OCI-LY7 (cell line): ENCODE measurements at regions of chr11 and their contacts with region 1.

Region 1: DNA sequence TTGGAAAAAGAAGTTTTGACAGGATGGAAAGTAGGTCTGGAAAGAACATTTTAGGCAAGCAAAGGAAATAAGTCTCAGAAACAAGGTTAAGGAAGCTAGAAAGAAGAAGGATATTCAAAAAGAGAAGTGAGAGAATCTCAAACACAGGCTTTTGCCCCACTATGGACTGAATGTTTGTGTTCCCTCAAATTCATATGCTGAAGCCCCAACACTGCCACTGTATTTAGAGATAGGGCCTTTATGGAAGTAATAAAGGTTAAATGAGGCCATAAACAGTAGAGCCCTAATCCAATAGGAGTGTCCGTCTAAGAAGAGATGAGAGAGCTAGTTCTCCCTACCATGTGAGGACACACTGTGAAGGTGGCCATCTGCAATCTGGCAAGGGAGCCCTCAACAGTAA is 20.6 kb upstream of the RPS13 start:
- DNase-seq: no peak
- H3K4me3 ChIP-seq: no peak overlapping the region
- H3K27ac ChIP-seq: no peak overlapping the region
- H3K4me1 ChIP-seq: no peaks in the 10 kb centered on the region
- CTCF ChIP-seq: no peak

Region 2: GRCh38 chr11:16993495-16993894 is 104.5 kb before region 1 on chr11:
- CTCF ChIA-PET with region 1: no interaction called
- POLR2A ChIA-PET with region 1: no interaction called
- intact Hi-C with region 1: no loop called
- DNase-seq: no peak
- H3K4me3 ChIP-seq: no peak overlapping the region
- H3K27ac ChIP-seq: no peak overlapping the region
- H3K4me1 ChIP-seq: no peaks in the 10 kb centered on the region
- CTCF ChIP-seq: no peak

Region 3: GRCh38 chr11:17077520-17078401 is 20.3 kb before region 1 on chr11 and contains the start of gene RPS13:
- CTCF ChIA-PET with region 1: no interaction called
- POLR2A ChIA-PET with region 1: interaction called, 36 read pairs
- intact Hi-C with region 1: no loop called
- DNase-seq: peak; percentile 98
- H3K4me3 ChIP-seq: peak within 1 kb of the TSS; percentile 84
- H3K27ac ChIP-seq: peak within 1 kb of the TSS; percentile 69
- H3K4me1 ChIP-seq: peaks cover 24% of the 10 kb centered on the region
- CTCF ChIP-seq: no peak
- total RNA-seq, gene RPS13: 1,576 and 1,911 TPM in 2 replicates

Region 4: GRCh38 chr11:17129003-17129402 is 31.0 kb after region 1 on chr11:
- CTCF ChIA-PET with region 1: no interaction called
- POLR2A ChIA-PET with region 1: no interaction called
- intact Hi-C with region 1: loop called (anchors 5 kb)
- DNase-seq: no peak
- H3K4me3 ChIP-seq: no peak overlapping the region
- H3K27ac ChIP-seq: no peak overlapping the region
- H3K4me1 ChIP-seq: no peaks in the 10 kb centered on the region
- CTCF ChIP-seq: no peak

Region 5: DNA sequence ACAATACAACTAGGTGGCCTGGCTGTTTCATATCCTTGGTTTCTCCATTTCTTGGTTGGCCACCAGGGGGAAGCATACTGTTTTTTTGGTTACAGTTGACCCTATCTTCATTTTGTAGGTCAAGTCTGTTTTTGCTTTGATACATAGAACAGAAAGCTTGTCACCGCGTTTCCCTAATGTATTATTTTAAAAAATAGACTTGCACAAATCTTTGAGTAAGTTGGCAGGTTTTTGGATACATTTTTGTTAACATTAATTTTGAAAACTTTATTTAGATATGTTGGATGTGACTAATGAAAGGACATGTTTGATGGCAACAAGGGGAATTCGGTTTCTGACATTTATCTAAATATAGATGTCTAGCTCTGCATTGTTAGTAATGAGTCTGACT is 256.6 kb after region 1 on chr11:
- CTCF ChIA-PET with region 1: no interaction called
- POLR2A ChIA-PET with region 1: no interaction called
- intact Hi-C with region 1: no loop called
- DNase-seq: peak; percentile 86
- H3K4me3 ChIP-seq: peak overlapping the region; percentile 70
- H3K27ac ChIP-seq: no peak overlapping the region
- H3K4me1 ChIP-seq: peaks cover 26% of the 10 kb centered on the region
- CTCF ChIP-seq: peak; percentile 90